ENCODE measurements at regions of chr15 and their contacts with region 1.

Region 1: GRCh38 chr15:98085003-98085639 is 124.6 kb downstream of the ARRDC4 start:
- DNase-seq: peak; percentile 44
- H3K4me3 ChIP-seq: no peak overlapping the region; a peak in 1 of 4 replicates
- H3K27ac ChIP-seq: no peak overlapping the region
- H3K4me1 ChIP-seq: no peaks in the 10 kb centered on the region
- H3K27me3 ChIP-seq: no peaks in the 10 kb centered on the region
- CTCF ChIP-seq: peak; percentile 77
- EP300 ChIP-seq: no peak
- RAD21 ChIP-seq: peak; percentile 71

Region 2: DNA sequence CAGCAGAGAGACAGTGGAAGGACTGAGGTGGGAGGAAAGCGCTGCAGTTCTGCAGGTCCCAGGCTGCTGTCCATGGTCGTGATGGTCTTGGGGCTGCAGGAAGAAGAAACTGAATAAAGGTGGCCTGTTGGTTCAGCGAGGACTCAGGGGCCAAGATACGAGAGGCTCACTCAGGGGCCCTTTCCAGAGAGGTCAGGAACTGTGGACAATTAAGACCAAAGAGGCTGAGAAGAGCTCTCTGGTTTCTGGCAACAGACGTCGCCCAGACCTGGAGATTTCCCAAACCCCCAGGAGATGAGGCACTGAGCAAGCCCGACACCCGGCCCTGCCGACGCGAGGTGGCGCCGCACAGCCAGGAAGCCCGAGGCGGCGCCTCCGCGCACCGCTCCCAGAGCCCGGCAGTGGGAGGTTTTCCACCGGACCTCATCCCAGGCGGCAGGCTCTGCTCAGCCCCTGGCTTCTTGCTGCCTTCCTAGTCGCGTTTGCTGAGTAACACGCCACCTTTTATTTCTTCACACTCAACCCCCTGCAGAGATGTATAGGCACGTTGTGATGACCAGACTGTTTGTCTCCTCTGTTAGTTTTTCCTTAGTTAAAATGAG is 181.0 kb before region 1 on chr15:
- CTCF ChIA-PET with region 1: interaction called, 18 read pairs
- POLR2A ChIA-PET with region 1: no interaction called
- DNase-seq: peak; percentile 79
- H3K4me3 ChIP-seq: peak overlapping the region in 1 of 2 experiments; percentile 11; a peak in 1 of 4 replicates
- H3K27ac ChIP-seq: no peak overlapping the region
- H3K4me1 ChIP-seq: no peaks in the 10 kb centered on the region
- H3K27me3 ChIP-seq: peaks cover 34% of the 10 kb centered on the region; the same call in 1 of the 2 replicates
- CTCF ChIP-seq: peak; percentile 68
- EP300 ChIP-seq: no peak
- RAD21 ChIP-seq: peak; percentile 66

Region 3: GRCh38 chr15:97909291-97909891 is 175.7 kb before region 1 on chr15:
- CTCF ChIA-PET with region 1: interaction called, 18 read pairs
- POLR2A ChIA-PET with region 1: no interaction called
- DNase-seq: peak; percentile 72
- H3K4me3 ChIP-seq: no peak overlapping the region
- H3K27ac ChIP-seq: no peak overlapping the region
- H3K4me1 ChIP-seq: no peaks in the 10 kb centered on the region
- H3K27me3 ChIP-seq: peaks cover 31% of the 10 kb centered on the region; the same call in 1 of the 2 replicates
- CTCF ChIP-seq: peak; percentile 88
- EP300 ChIP-seq: no peak
- RAD21 ChIP-seq: peak; percentile 85

Region 4: DNA sequence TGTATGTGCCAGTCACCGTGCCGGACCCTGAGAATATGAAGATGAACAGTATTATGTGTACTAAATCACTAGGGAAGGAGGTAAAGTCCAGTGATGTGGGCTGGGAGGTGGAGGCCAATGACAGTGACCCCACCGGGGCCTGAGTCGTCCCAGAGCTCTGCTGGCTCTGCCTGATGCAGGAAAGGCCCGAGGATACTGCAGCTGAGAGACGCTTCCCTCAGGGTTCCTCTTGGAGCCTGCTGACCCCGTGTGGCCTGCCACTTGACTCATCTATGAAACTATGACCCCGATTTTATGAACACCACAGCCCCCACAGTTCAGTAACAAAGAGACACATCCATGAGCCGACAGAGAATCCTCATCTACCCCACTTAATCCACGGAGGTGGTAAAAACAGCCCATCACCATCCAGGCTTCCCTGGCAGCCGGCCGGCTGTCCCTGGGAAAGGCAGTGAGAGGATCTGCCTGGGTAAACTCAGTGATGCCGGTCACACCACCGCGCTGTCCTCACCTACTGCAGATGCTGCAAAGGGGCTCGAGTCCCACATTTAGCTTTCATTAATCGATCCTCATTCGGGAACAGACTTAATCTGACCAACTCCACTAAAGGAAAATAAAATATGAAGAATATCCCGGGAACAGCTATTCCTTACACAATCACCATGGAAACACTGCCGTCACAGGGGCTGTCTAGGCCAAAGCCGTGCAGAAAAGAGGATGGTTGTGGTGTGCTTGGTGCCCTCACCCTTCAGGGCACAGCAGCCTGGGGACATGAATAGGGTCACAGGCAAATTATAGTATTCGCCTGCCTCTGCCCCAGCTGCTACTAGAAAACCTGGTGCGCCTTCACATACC is 41.7 kb before region 1 on chr15:
- CTCF ChIA-PET with region 1: no interaction called
- POLR2A ChIA-PET with region 1: no interaction called
- DNase-seq: peak; percentile 3
- H3K4me3 ChIP-seq: no peak overlapping the region
- H3K27ac ChIP-seq: no peak overlapping the region
- H3K4me1 ChIP-seq: no peaks in the 10 kb centered on the region
- H3K27me3 ChIP-seq: no peaks in the 10 kb centered on the region; the same call in 1 of the 2 replicates
- CTCF ChIP-seq: no peak
- EP300 ChIP-seq: no peak
- RAD21 ChIP-seq: 0 out of 2 replicates have a peak, but pooled peaks have one; percentile 16

Region 5: GRCh38 chr15:98057453-98057852 is 27.7 kb before region 1 on chr15:
- CTCF ChIA-PET with region 1: no interaction called
- POLR2A ChIA-PET with region 1: no interaction called
- DNase-seq: no peak
- H3K4me3 ChIP-seq: no peak overlapping the region
- H3K27ac ChIP-seq: no peak overlapping the region
- H3K4me1 ChIP-seq: no peaks in the 10 kb centered on the region
- H3K27me3 ChIP-seq: no peaks in the 10 kb centered on the region
- CTCF ChIP-seq: no peak
- EP300 ChIP-seq: no peak
- RAD21 ChIP-seq: no peak

Region 6: GRCh38 chr15:98069256-98069655 is 15.9 kb before region 1 on chr15:
- CTCF ChIA-PET with region 1: no interaction called
- POLR2A ChIA-PET with region 1: no interaction called
- DNase-seq: no peak
- H3K4me3 ChIP-seq: no peak overlapping the region
- H3K27ac ChIP-seq: no peak overlapping the region
- H3K4me1 ChIP-seq: no peaks in the 10 kb centered on the region; a peak in 1 of 4 replicates
- H3K27me3 ChIP-seq: no peaks in the 10 kb centered on the region
- CTCF ChIP-seq: no peak
- EP300 ChIP-seq: no peak
- RAD21 ChIP-seq: no peak

Region 7: GRCh38 chr15:98217356-98217755 is 132.2 kb after region 1 on chr15:
- CTCF ChIA-PET with region 1: no interaction called
- POLR2A ChIA-PET with region 1: no interaction called
- DNase-seq: no peak
- H3K4me3 ChIP-seq: no peak overlapping the region
- H3K27ac ChIP-seq: no peak overlapping the region
- H3K4me1 ChIP-seq: no peaks in the 10 kb centered on the region
- H3K27me3 ChIP-seq: no peaks in the 10 kb centered on the region; the same call in 1 of the 2 replicates
- CTCF ChIP-seq: no peak
- EP300 ChIP-seq: no peak
- RAD21 ChIP-seq: no peak

Measured in SK-N-SH (cell line).